ENCODE measurements at regions of chr13 and their contacts with region 1.

Region 1: GRCh38 chr13:36275190-36276002 is 22.2 kb downstream of the CCDC169 start:
- DNase-seq: no peak
- H3K4me3 Mint-ChIP-seq: no peak overlapping the region
- H3K27ac Mint-ChIP-seq: no peak overlapping the region
- H3K4me1 Mint-ChIP-seq: no peaks in the 10 kb centered on the region
- H3K27me3 Mint-ChIP-seq: no peaks in the 10 kb centered on the region

Region 2: DNA sequence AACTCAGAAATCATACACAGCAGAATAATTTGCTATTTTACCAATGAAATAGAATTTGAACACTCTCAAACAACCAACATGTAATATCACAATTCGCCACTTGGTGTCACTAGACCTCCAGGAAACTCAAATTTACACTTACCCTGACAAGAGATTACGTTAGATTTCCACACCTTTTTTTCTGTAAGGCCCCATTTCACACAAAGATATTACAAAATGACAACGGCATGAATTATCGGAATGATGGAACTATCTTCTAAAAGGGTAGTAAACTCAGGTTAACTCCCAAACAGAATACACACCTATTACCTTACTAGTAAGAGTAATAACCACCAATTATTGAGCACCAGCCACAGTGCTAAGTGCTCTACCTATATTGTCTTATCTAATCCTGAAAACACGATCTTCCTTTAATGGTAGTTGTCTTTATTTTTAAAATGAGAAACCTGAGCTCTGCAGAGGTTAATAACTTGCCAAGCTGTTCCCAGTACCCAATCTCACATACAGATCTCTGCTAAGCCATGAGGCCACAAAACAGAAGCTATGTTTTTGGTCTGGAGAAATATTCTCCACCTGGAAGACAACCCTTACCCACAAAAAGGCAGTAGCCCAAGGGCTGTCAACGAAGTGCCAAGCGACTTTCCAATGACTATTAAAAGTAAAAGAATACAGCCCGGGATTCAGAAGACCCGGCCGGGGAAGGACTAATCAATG is 296.6 kb before region 1 on chr13:
- CTCF ChIA-PET with region 1: interaction called, 48 read pairs
- DNase-seq: peak; percentile 24
- H3K4me3 Mint-ChIP-seq: no peak overlapping the region
- H3K27ac Mint-ChIP-seq: no peak overlapping the region
- H3K4me1 Mint-ChIP-seq: no peaks in the 10 kb centered on the region
- H3K27me3 Mint-ChIP-seq: no peaks in the 10 kb centered on the region

Region 3: GRCh38 chr13:36163809-36164308 is 111.5 kb before region 1 on chr13:
- CTCF ChIA-PET with region 1: no interaction called
- DNase-seq: no peak
- H3K4me3 Mint-ChIP-seq: no peak overlapping the region
- H3K27ac Mint-ChIP-seq: no peak overlapping the region
- H3K4me1 Mint-ChIP-seq: no peaks in the 10 kb centered on the region
- H3K27me3 Mint-ChIP-seq: no peaks in the 10 kb centered on the region

Region 4: GRCh38 chr13:36362251-36362650 is 86.9 kb after region 1 on chr13:
- CTCF ChIA-PET with region 1: no interaction called
- DNase-seq: no peak
- H3K4me3 Mint-ChIP-seq: no peak overlapping the region
- H3K27ac Mint-ChIP-seq: no peak overlapping the region
- H3K4me1 Mint-ChIP-seq: no peaks in the 10 kb centered on the region
- H3K27me3 Mint-ChIP-seq: peaks cover 11% of the 10 kb centered on the region